HepG2 (cell line): ENCODE measurements at regions of chr4 and their contacts with region 1.

Region 1: DNA sequence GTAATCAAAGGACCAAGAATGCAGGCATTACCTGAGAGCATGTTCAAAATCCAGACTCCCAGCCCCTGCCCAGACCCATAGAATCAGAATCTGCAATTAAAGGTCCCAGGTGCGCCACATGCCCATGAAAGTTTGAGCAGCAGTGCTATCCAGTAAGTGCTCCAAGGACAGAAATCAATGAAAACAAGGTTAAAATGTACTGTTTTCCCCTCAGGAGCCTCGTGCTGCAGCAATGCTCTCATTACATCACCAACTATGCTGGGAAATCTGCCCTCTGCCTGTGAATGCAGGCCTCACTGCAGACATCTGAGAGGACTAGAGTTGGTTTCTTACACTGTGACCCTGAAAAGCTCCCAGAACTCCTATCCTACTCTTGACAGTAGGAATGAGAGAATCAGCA is 21.1 kb downstream of the ANXA5 start:
- DNase-seq: peak; percentile 41
- ATAC-seq: peak; percentile 75
- H3K4me3 ChIP-seq: no peak overlapping the region
- H3K27ac ChIP-seq: peak overlapping the region; percentile 75
- H3K4me1 ChIP-seq: peaks cover 40% of the 10 kb centered on the region
- H3K27me3 ChIP-seq: no peaks in the 10 kb centered on the region
- CTCF ChIP-seq: peak; percentile 54
- EP300 ChIP-seq: no peak
- POLR2A ChIP-seq: no peak
- RAD21 ChIP-seq: 0 out of 2 replicates have a peak, but pooled peaks have one; percentile 8

Region 2: DNA sequence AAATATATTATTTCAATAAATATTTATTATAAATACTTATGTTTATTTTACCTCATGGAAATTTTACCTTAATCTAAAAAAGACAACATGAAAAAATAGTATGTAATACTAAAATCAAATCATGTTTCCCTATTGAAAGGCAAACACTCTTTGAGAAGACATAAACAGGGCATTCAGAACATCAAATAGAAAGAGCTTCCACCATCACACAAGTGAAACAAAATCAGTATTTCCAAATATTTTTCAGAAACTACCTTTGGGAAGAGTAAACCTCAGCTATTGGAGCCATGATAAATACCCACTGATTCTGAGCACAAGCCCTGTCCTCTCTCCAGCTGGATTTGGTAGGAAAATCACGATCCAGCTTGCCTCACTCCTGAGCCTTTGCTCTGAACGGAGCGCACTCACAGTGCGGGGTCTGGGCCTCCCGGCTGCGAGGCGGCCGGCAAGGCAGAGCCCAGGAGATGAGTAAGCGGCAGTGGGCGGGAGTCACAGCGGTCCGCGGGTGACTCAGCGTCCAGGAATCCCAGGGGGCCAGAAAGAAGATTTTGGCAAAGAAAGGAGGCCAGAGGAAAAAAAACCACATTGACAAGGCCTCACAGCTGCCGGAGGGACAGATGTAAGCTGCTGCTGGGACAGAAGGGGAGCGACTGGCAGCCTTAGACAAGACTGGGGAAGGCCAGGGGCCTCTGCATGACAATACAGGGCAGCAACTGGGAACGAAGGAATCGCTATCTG is 35.7 kb after region 1 on chr4:
- CTCF ChIA-PET with region 1: no interaction called
- POLR2A ChIA-PET with region 1: interaction called, 3 read pairs
- in situ Hi-C with region 1: no loop called
- intact Hi-C with region 1: loop called (anchors 5 kb)
- DNase-seq: peak; percentile 70
- ATAC-seq: peak; percentile 100
- H3K4me3 ChIP-seq: peak overlapping the region; percentile 31 to 58 (median 47); a peak in 5 of 6 replicates
- H3K27ac ChIP-seq: no peak overlapping the region
- H3K4me1 ChIP-seq: peaks cover 7% of the 10 kb centered on the region; the same call in 1 of the 2 replicates
- H3K27me3 ChIP-seq: peaks cover 0 to 7% of the 10 kb centered on the region in 2 experiments; a peak in 2 of 5 replicates
- CTCF ChIP-seq: no peak
- EP300 ChIP-seq: 0 out of 4 replicates have a peak, but pooled peaks of 1 of the 2 experiments have one; percentile 24
- POLR2A ChIP-seq: no peak
- RAD21 ChIP-seq: no peak

Region 3: DNA sequence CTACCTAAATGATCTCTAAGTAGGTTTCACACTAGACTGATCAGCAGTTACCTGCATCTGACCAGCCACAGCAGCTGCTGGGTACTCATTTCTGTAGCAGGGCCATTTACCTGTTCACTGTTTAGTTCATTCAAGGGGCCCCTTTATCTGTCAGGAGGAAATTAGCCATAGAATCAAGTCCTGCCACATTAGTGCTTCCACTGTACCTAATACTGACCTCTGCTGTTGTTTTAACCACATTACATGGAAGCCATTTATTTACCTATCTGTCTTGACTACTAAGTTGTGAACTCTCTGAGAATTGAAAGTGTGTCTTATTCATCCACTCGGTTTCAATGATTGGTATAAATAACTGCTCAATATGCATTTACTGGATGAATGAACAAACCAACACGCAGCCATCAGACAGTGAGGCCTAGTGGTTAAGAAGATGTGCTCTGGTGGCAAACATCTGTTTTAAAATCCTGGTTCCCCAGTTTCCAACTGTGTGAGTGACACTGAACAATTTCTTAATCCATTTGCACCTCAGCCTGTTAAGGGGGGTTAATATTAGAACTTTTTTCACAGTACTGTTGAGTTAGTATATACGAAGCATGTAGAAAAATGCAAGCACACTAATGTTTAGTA is 51.0 kb after region 1 on chr4:
- CTCF ChIA-PET with region 1: no interaction called
- POLR2A ChIA-PET with region 1: no interaction called
- in situ Hi-C with region 1: loop called (anchors 10 kb)
- intact Hi-C with region 1: loop called (anchors 5 kb)
- DNase-seq: peak; percentile 64
- ATAC-seq: peak; percentile 92
- H3K4me3 ChIP-seq: no peak overlapping the region
- H3K27ac ChIP-seq: no peak overlapping the region
- H3K4me1 ChIP-seq: no peaks in the 10 kb centered on the region
- H3K27me3 ChIP-seq: peaks cover 0 to 4% of the 10 kb centered on the region in 2 experiments; a peak in 2 of 5 replicates
- CTCF ChIP-seq: peak; percentile 76
- EP300 ChIP-seq: no peak
- POLR2A ChIP-seq: no peak
- RAD21 ChIP-seq: 0 out of 2 replicates have a peak, but pooled peaks have one; percentile 34

Region 4: GRCh38 chr4:121800961-121801714 is 125.4 kb after region 1 on chr4 and contains the start of gene EXOSC9:
- CTCF ChIA-PET with region 1: no interaction called
- POLR2A ChIA-PET with region 1: no interaction called
- in situ Hi-C with region 1: no loop called
- intact Hi-C with region 1: loop called (anchors 5 kb)
- DNase-seq: peak; percentile 87
- ATAC-seq: peak; percentile 87
- H3K4me3 ChIP-seq: peak within 1 kb of the TSS; percentile 79 to 86 (median 84)
- H3K27ac ChIP-seq: peak within 1 kb of the TSS; percentile 93
- H3K4me1 ChIP-seq: peaks cover 47% of the 10 kb centered on the region
- H3K27me3 ChIP-seq: no peaks in the 10 kb centered on the region; a peak in 1 of 5 replicates
- CTCF ChIP-seq: no peak
- EP300 ChIP-seq: no peak; a peak in 1 of 4 replicates
- POLR2A ChIP-seq: peak; percentile 88 to 92
- RAD21 ChIP-seq: 0 out of 2 replicates have a peak, but pooled peaks have one; percentile 10
- total RNA-seq, gene EXOSC9: 48.0 and 61.5 TPM in 2 replicates